Vagina (tissue), 2 donors: ENCODE measurements at regions of chr5 and their contacts with region 1.

Region 1: DNA sequence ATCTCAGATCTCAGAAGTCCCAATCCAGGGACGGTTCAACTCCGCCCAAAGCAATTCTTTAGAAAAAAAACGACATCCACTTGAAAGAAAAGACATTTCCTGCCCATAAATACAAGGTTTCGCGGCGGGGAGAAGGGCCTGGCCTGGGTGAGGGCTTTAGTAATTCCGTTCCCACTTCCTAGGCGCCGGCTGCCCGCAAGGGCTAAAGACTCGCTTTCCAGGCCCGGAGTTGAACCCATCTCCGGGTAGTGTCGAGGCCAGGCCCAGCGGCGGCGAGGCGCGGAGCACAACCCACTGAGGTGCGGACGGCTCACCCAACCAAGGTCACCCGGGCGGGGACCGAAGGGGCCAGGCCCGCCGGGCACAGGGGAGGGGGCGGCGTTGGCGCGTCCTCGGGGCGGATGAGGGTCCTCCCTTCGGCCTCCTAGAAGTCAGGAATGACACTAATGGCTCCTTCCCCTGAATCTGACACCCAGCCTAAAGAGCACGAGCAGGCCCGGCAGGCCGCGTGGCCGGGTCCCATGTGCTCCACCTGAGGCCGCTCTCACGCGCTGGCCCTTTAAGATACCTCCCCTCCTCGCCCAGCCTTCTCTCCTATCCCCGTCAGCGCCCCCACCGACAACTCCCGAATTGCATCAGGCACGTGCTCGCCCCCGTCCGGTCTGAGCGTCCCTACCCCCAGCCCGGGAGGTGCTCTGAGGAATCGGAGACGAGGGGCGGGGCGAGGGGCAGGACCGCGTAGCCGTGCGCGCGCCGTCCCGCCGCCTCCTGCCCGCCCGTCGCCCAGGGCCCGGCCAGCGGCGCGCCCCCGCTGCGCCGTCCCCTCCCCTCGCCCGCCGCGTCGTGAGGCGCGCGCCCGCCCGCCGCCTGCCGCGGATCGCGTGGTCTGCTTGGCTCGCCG is 467 bp upstream of the LARP1 start:
- DNase-seq: peak in 1 of 2 donors; percentile 99
- H3K4me3 ChIP-seq: peak overlapping the region; percentile 73 to 81
- H3K27ac ChIP-seq: peak overlapping the region; percentile 98
- H3K4me1 ChIP-seq: peaks cover 42% of the 10 kb centered on the region
- H3K27me3 ChIP-seq: no peaks in the 10 kb centered on the region
- CTCF ChIP-seq: peak in 1 of 3 experiments; percentile 35
- POLR2A ChIP-seq: peak in 1 of 2 donors; percentile 79

Region 2: GRCh38 chr5:154583545-154584496 is 170.9 kb before region 1 on chr5:
- intact Hi-C with region 1: no loop called
- DNase-seq: no peak
- H3K4me3 ChIP-seq: no peak overlapping the region
- H3K27ac ChIP-seq: no peak overlapping the region
- H3K4me1 ChIP-seq: no peaks in the 10 kb centered on the region
- H3K27me3 ChIP-seq: no peaks in the 10 kb centered on the region
- CTCF ChIP-seq: no peak
- POLR2A ChIP-seq: no peak

Region 3: DNA sequence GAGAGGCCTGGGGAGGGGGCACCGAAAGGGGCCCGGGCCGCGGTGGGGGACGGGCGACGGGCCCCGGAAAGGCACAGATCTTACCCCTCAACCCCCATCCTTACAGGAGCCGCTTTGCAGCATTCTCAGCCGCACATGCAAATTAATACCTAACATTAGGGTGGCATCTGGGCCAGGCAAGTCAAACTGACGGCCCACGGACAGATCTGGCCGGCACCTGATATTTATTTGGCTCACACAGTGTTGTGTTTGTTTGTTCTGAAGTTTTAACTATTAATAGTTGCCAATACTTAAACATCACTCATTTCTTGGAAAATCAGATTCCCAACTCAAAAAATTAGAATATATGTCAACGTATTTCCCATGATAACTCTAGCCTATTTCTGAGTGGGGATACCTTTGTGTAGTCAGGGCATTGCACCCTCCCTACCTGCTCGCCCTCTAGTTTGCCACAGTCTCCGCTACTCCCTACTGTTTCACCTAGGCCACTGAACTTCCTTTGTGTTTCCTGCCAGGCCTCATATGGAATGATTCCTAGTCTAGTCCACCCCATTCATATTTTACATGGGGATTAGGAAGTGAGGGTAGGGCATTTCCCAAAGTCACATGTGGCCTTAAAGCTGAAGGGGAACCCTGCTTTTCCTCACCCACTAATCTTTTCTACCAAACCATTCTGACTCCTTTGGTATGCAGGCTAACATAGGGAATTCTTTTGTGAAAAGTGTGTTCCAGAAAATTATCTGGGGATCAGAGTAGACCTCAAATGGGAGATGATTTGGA is 71.4 kb before region 1 on chr5:
- intact Hi-C with region 1: loop called (anchors 10 kb)
- DNase-seq: no peak
- H3K4me3 ChIP-seq: peak overlapping the region; percentile 48
- H3K27ac ChIP-seq: peak overlapping the region; percentile 78
- H3K4me1 ChIP-seq: peaks cover 14% of the 10 kb centered on the region
- H3K27me3 ChIP-seq: no peaks in the 10 kb centered on the region
- CTCF ChIP-seq: no peak
- POLR2A ChIP-seq: no peak

Region 4: GRCh38 chr5:154857530-154858296 is 103.0 kb after region 1 on chr5:
- intact Hi-C with region 1: loop called (anchors 2 kb)
- DNase-seq: peak in 1 of 2 donors; percentile 99
- H3K4me3 ChIP-seq: peak overlapping the region; percentile 79 to 86
- H3K27ac ChIP-seq: peak overlapping the region; percentile 98
- H3K4me1 ChIP-seq: peaks cover 46% of the 10 kb centered on the region
- H3K27me3 ChIP-seq: no peaks in the 10 kb centered on the region
- CTCF ChIP-seq: no peak
- POLR2A ChIP-seq: peak in 1 of 2 donors; percentile 59